ENCODE measurements at regions of chr16 and their contacts with region 1.

Region 1: DNA sequence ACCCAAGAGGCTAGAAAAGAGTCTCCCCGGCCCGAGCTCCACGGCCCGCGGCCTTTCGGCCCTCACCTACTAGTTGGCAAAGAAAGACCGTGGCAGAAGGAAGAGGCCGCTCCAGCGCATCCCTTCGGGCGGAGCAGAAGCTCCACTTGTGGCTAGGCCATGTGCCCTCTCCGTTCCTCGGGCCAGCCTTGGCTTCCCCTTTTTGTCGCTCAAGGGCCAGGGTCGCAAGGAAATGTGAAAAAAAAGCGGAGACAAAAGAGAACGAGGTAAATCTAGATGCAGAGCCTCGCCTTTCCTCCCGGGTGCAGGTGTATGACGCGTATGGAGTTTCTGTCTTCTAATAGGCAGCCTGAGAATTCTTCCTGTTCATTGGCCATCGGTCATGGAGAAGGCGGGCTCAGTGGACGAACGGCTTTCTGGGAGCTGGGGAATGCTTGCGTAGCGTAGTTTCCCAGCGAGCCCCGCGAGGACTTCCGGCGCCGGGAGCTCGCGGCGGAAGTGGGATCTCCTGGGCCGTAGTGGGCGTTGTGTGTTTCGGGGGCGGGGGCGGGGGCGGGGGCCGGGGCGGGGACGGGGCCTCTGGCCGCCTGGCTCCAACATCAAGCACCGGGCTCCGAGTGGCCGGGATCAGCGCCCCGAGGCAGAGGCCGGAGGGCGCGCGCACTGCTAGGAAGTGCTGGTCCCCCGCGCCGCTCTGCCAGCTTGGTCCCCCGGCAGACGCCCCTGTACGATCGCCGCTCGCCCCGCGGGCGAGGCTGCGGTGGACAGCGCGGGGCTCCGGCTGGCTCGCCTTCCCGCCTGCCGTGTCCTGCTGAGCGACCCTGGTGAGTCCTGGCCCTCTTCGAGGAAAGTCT is at the start of gene ZNF213:
- DNase-seq: peak; percentile 98
- ATAC-seq: peak; percentile 95
- H3K4me3 Mint-ChIP-seq: peak within 1 kb of the TSS; percentile 93
- H3K27ac Mint-ChIP-seq: peak within 1 kb of the TSS; percentile 97
- H3K4me1 Mint-ChIP-seq: peaks cover 32% of the 10 kb centered on the region
- H3K27me3 Mint-ChIP-seq: no peaks in the 10 kb centered on the region
- total RNA-seq, gene ZNF213: 10.6 to 12.3 TPM

Region 2: DNA sequence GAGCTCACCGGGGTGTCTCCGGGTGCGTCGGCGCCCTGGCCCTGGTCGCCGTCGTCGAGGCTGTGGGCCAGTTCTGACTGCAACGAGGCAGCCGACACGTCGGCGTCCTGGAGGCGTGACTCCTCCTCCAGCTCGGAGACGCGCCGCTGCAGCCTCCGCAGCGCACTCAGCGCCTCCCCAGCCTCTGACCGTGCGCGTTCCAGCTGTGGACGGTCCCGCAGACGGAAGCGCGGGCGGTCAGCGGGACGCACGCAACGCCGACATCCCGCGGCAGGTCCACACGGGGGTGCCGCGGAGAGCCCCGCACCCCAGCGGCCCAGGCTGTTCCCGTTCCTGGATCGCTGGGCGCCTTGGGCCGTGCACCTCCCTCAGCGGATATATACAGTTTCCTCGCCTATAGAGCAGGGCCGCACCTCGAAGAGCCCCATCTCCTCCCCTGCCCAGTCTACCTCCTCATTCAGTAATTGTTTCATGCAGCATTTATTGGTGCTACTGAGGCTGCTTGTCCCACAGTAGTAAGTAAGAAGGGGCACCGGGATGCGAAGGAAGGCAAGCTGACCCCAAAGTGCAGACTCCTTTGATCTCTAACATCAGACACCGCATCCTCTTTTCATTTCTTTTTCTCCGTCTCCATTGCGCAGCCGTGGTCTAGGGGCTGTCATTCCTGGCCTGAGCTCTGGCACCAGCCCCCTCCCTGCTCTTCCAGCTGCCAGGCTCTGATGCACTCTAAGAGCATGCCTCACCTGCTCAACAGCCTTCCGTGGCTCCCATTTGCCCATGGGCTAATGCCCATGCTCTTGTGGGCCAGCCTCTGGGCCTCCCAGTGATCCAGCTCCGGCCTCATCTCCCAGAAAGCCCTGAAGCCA is 105.0 kb before region 1 on chr16:
- CTCF ChIA-PET with region 1: interaction called, 185 read pairs
- DNase-seq: peak; percentile 81
- ATAC-seq: peak; percentile 66
- H3K4me3 Mint-ChIP-seq: peak overlapping the region; percentile 65
- H3K27ac Mint-ChIP-seq: peak overlapping the region; percentile 62
- H3K4me1 Mint-ChIP-seq: peaks cover 44% of the 10 kb centered on the region
- H3K27me3 Mint-ChIP-seq: peaks cover 51% of the 10 kb centered on the region

Region 3: DNA sequence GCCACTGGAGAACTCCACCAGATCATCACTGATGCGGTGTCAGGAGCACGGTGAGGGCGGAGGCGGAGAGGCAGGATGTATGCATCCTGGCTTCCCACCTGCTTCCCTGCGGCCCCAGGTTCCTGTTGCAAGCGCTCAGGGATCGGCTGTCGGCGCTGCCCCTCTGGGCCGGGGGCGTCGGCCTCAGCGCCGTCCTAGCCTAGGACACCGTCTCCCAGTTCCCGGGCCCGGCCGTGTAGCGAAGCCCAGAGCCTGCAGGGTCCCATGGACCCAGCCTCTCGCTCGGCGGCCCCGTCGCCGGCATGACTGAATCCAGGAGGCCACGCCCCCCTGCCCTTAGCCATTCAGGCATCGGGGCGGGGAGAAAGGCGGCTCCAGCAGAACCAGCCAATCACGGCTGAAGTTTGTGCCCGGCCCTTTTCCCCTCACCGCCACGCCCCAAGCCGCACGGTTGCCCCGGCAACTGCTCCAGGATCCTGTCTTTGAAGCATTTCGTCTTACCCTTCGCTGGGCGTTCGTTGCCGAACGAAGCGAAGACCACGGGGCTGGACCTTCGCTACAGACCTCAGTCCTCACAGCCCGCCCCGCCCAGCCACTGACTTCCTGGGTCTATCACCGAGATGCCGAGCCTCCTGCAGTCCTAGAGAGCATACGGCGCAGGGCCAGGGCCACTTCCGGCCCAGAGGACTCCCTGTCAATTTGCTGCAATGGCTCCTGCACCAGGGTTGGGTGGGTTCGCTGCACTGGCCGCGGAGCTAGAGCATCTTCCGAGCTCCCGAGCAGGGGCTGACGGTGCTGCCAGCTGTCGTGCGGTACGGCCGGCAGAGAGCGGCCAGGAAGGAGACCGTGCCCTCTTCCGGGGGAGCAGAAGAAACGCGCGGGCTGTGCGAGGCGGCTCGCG is 10.6 kb before region 1 on chr16:
- CTCF ChIA-PET with region 1: interaction called, 25 read pairs
- DNase-seq: peak; percentile 99
- ATAC-seq: peak; percentile 88
- H3K4me3 Mint-ChIP-seq: peak overlapping the region; percentile 98
- H3K27ac Mint-ChIP-seq: peak overlapping the region; percentile 99
- H3K4me1 Mint-ChIP-seq: peaks cover 49% of the 10 kb centered on the region
- H3K27me3 Mint-ChIP-seq: no peaks in the 10 kb centered on the region

Region 4: GRCh38 chr16:3150346-3151218 is 15.8 kb after region 1 on chr16:
- CTCF ChIA-PET with region 1: interaction called, 128 read pairs
- DNase-seq: peak; percentile 99
- ATAC-seq: peak; percentile 86
- H3K4me3 Mint-ChIP-seq: peak overlapping the region; percentile 82
- H3K27ac Mint-ChIP-seq: peak overlapping the region; percentile 90
- H3K4me1 Mint-ChIP-seq: peaks cover 32% of the 10 kb centered on the region
- H3K27me3 Mint-ChIP-seq: peaks cover 21% of the 10 kb centered on the region

Region 5: GRCh38 chr16:3158471-3159314 is 23.9 kb after region 1 on chr16:
- CTCF ChIA-PET with region 1: interaction called, 14 read pairs
- DNase-seq: peak; percentile 96
- ATAC-seq: peak; percentile 88
- H3K4me3 Mint-ChIP-seq: peak overlapping the region; percentile 83
- H3K27ac Mint-ChIP-seq: peak overlapping the region; percentile 92
- H3K4me1 Mint-ChIP-seq: peaks cover 43% of the 10 kb centered on the region
- H3K27me3 Mint-ChIP-seq: peaks cover 25% of the 10 kb centered on the region

Measured in activated CD8-positive, alpha-beta memory T cell treated with anti-CD3 and anti-CD28 coated beads, Interleukin-2, amount 10 ng/mL, durations not matched to agents 7 days and 5 days (primary cell).